ENCODE measurements at regions of chr6 and their contacts with region 1.

Region 1: GRCh38 chr6:47944846-47945245 is 163.0 kb downstream of the OPN5 start:
- DNase-seq: no peak
- H3K4me3 ChIP-seq: no peak overlapping the region
- H3K27ac ChIP-seq: no peak overlapping the region
- H3K4me1 ChIP-seq: no peaks in the 10 kb centered on the region
- H3K27me3 ChIP-seq: no peaks in the 10 kb centered on the region
- CTCF ChIP-seq: no peak
- POLR2A ChIP-seq: no peak

Region 2: DNA sequence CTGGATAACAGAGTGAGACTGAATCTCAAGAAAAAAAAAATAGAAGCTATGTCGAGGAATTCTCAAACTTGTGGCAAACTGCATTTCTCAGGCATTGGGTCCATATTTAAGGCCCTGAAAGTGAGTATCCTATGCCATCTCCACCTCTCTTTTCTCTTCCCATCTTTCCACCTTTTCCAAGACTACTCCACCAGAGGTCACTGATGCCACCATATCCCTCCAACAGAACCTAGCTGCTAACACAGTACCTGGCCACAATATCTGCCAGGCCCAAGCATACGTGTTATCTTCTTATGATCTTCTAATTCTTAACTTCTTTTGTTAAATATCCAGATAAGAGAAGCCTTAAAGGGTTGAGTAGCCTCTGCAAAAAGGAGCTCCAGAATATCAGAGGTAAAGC is 254.6 kb before region 1 on chr6:
- intact Hi-C with region 1: loop called (anchors 5 kb)
- DNase-seq: no peak
- H3K4me3 ChIP-seq: no peak overlapping the region
- H3K27ac ChIP-seq: no peak overlapping the region
- H3K4me1 ChIP-seq: no peaks in the 10 kb centered on the region
- H3K27me3 ChIP-seq: no peaks in the 10 kb centered on the region
- CTCF ChIP-seq: no peak
- POLR2A ChIP-seq: no peak

Region 3: GRCh38 chr6:48176645-48177308 is 231.9 kb after region 1 on chr6:
- intact Hi-C with region 1: no loop called
- DNase-seq: no peak
- H3K4me3 ChIP-seq: no peak overlapping the region
- H3K27ac ChIP-seq: no peak overlapping the region
- H3K4me1 ChIP-seq: no peaks in the 10 kb centered on the region
- H3K27me3 ChIP-seq: no peaks in the 10 kb centered on the region
- CTCF ChIP-seq: no peak
- POLR2A ChIP-seq: no peak

Measured in vagina (tissue), 2 donors.